PC-3 (cell line): ENCODE measurements at regions of chr3 and their contacts with region 1.

Region 1: GRCh38 chr3:152524198-152525140 is 255.7 kb downstream of the MBNL1 start:
- DNase-seq: peak; percentile 80
- ATAC-seq: peak; percentile 51; the same call in 1 of the 2 replicates
- H3K4me3 ChIP-seq: no peak overlapping the region
- H3K27ac ChIP-seq: no peak overlapping the region
- H3K4me1 ChIP-seq: no peaks in the 10 kb centered on the region
- H3K27me3 ChIP-seq: no peaks in the 10 kb centered on the region
- CTCF ChIP-seq: peak; percentile 89

Region 2: DNA sequence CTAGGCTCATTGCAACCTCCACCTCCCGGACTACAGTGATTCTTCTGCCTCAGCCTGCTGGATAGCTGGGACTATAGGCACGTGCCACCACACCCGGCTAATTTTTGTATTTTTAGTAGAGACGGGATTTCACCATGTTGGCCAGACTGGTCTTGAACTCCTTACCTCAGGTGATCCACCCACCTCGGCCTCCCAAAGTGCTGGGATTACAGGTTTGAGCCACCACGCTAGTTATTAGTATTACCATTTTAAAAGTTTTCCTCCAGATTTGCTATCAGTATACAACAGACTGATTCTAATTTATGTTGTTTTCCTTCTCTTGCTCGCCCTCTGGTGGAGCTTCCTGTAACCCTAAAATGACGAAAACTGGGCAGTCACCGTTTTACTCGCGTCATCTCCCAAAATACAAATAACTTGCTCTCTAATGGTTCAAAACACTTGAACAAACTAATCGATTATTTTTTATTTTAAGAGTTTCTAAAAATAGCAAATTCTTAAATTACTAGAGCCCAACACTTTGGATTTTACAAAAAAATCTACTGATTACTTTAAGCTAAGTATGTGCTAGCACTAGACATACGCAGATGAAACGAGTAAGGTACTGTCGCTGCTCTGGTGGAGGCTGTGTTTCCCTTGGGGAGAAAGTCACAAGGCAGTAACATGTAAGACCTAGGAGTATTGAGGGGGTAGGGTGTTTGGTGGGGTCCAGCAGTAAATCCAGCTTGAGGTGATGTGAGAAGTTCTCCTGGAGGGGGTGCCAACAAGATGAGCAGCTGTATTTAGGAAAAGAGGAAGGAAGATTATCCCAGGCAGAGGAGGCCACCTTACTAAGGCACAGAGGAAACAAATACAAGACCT is 52.4 kb before region 1 on chr3:
- CTCF ChIA-PET with region 1: no interaction called
- POLR2A ChIA-PET with region 1: no interaction called
- intact Hi-C with region 1: loop called (anchors 1 kb)
- DNase-seq: peak; percentile 77
- ATAC-seq: peak; percentile 85
- H3K4me3 ChIP-seq: peak overlapping the region; percentile 11; the same call in 1 of the 2 replicates
- H3K27ac ChIP-seq: no peak overlapping the region
- H3K4me1 ChIP-seq: no peaks in the 10 kb centered on the region
- H3K27me3 ChIP-seq: no peaks in the 10 kb centered on the region
- CTCF ChIP-seq: peak; percentile 74

Region 3: DNA sequence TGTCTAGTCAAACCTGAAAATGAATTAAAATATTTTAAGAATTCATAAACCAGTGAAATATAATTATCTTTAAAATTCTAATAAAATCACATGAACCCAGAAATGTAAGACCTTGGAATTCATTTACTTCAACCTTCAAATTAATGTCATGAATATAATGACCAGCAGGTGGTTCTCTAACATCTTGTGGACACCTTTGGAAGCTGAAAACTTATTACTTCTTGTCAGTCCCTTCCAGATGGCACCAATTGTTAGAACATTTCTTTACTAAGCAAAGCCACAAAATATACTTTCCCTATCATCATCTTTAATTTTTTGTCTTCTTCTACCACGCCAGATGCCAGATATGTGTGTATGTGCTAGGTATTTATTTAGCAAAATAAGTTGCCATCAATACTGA is 15.8 kb before region 1 on chr3:
- CTCF ChIA-PET with region 1: no interaction called
- POLR2A ChIA-PET with region 1: no interaction called
- intact Hi-C with region 1: loop called (anchors 2 kb)
- DNase-seq: peak; percentile 61
- ATAC-seq: peak; percentile 48; the same call in 1 of the 2 replicates
- H3K4me3 ChIP-seq: no peak overlapping the region
- H3K27ac ChIP-seq: no peak overlapping the region
- H3K4me1 ChIP-seq: no peaks in the 10 kb centered on the region
- H3K27me3 ChIP-seq: no peaks in the 10 kb centered on the region; the same call in 1 of the 2 replicates
- CTCF ChIP-seq: peak; percentile 58